Endothelial cell of umbilical vein (primary cell): ENCODE measurements at regions of chr4 and their contacts with region 1.

Region 1: DNA sequence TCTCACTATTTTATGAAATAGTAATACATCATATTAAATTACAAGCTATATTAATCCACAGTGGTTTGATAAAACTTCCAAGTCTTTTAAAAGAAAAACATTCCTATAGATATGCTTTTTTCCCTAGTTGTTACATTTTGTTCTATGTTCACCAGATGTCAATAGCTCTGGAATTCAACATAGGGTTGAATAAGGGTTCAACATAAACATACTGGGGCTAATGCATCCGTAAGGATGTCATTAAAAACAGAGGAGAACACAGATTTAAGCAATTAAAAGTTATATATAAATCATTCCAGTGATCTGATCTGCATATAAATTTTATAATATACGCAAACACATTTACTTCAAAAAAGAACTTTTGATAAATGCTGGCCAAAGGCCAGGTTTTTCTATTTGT is 32.5 kb downstream of the SULT1B1 start:
- DNase-seq: no peak
- H3K4me3 ChIP-seq: no peak overlapping the region
- H3K27ac ChIP-seq: peak overlapping the region; percentile 94
- H3K4me1 ChIP-seq: peaks cover 60% of the 10 kb centered on the region
- H3K27me3 ChIP-seq: no peaks in the 10 kb centered on the region
- CTCF ChIP-seq: no peak
- POLR2A ChIP-seq: no peak

Region 2: DNA sequence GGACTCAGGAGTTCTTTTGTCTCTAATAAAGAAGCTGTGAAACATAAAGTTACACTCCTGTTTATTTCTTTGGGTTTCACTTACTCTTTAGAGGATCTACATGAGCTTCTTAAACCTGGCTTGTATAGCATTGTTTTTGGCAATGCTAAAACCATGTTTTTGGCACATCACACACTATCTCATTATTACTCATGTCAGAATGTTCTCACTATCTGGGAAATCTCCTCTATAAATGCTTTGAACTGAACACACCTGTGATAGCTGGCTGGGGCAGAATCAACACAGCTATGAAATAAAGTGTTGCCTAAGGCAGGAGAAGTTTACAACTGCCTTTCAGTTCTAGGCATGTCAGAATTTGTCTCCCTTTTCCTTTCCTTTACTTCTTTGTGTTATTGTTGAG is 20.1 kb before region 1 on chr4:
- CTCF ChIA-PET with region 1: interaction called, 3 read pairs
- POLR2A ChIA-PET with region 1: no interaction called
- dilution Hi-C with region 1: no loop called
- intact Hi-C with region 1: loop called (anchors 1 kb)
- DNase-seq: no peak
- H3K4me3 ChIP-seq: no peak overlapping the region
- H3K27ac ChIP-seq: peak overlapping the region; percentile 79
- H3K4me1 ChIP-seq: peaks cover 17% of the 10 kb centered on the region
- H3K27me3 ChIP-seq: no peaks in the 10 kb centered on the region
- CTCF ChIP-seq: no peak
- POLR2A ChIP-seq: no peak

Region 3: DNA sequence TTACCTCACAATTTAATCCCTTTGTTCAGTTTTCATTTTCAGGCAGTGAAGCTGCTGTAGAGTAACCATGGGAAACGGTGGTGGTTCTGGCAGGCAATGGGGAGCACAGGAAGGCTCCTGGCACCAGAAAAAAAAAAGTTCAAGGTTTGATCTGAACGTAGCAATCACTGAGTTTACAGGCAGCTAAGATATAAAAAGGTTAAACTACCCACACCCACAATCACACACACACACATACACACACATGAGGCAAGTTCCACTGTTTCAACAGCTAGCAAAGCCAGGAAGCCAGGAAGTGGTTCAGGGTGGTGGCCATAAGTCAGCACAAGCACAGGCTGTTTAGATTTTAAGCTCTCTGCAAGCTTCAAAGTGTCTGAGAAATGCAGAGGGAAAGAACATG is 32.5 kb after region 1 on chr4 and contains the start of gene SULT1B1:
- CTCF ChIA-PET with region 1: interaction called, 6 read pairs
- POLR2A ChIA-PET with region 1: interaction called, 4 read pairs
- dilution Hi-C with region 1: no loop called
- intact Hi-C with region 1: loop called (anchors 1 kb)
- DNase-seq: peak; percentile 89
- H3K4me3 ChIP-seq: peak within 1 kb of the TSS; percentile 21 to 79 (median 27)
- H3K27ac ChIP-seq: peak within 1 kb of the TSS; percentile 95
- H3K4me1 ChIP-seq: peaks cover 69% of the 10 kb centered on the region
- H3K27me3 ChIP-seq: no peaks in the 10 kb centered on the region
- CTCF ChIP-seq: no peak
- POLR2A ChIP-seq: no peak
- total RNA-seq, gene SULT1B1: 59.5 and 68.2 TPM in 2 replicates

Region 4: GRCh38 chr4:69765751-69766150 is 37.8 kb after region 1 on chr4:
- CTCF ChIA-PET with region 1: interaction called, 6 read pairs
- POLR2A ChIA-PET with region 1: interaction called, 4 read pairs
- dilution Hi-C with region 1: no loop called
- intact Hi-C with region 1: loop called (anchors 1 kb)
- DNase-seq: peak; percentile 73
- H3K4me3 ChIP-seq: no peak overlapping the region
- H3K27ac ChIP-seq: peak overlapping the region; percentile 73
- H3K4me1 ChIP-seq: peaks cover 43% of the 10 kb centered on the region
- H3K27me3 ChIP-seq: no peaks in the 10 kb centered on the region
- CTCF ChIP-seq: no peak
- POLR2A ChIP-seq: no peak